ENCODE measurements at regions of chr1 and their contacts with region 1.

Region 1: GRCh38 chr1:86833461-86834215 is 80.3 kb downstream of the SELENOF start:
- DNase-seq: peak in 2 of 3 donors; percentile 64 to 89
- ATAC-seq: peak; percentile 98
- H3K4me3 ChIP-seq: no peak overlapping the region
- H3K4me1 ChIP-seq: no peaks in the 10 kb centered on the region
- CTCF ChIP-seq: no peak

Region 2: GRCh38 chr1:86948212-86948611 is 114.6 kb after region 1 on chr1:
- intact Hi-C with region 1: no loop called
- DNase-seq: no peak
- ATAC-seq: no peak
- H3K4me3 ChIP-seq: no peak overlapping the region
- H3K4me1 ChIP-seq: no peaks in the 10 kb centered on the region
- CTCF ChIP-seq: no peak

Region 3: GRCh38 chr1:86965012-86965826 is 131.6 kb after region 1 on chr1:
- intact Hi-C with region 1: loop called (anchors 10 kb)
- DNase-seq: peak in 1 of 3 donors; percentile 64
- ATAC-seq: no peak
- H3K4me3 ChIP-seq: no peak overlapping the region
- H3K4me1 ChIP-seq: no peaks in the 10 kb centered on the region
- CTCF ChIP-seq: peak; percentile 11

Region 4: DNA sequence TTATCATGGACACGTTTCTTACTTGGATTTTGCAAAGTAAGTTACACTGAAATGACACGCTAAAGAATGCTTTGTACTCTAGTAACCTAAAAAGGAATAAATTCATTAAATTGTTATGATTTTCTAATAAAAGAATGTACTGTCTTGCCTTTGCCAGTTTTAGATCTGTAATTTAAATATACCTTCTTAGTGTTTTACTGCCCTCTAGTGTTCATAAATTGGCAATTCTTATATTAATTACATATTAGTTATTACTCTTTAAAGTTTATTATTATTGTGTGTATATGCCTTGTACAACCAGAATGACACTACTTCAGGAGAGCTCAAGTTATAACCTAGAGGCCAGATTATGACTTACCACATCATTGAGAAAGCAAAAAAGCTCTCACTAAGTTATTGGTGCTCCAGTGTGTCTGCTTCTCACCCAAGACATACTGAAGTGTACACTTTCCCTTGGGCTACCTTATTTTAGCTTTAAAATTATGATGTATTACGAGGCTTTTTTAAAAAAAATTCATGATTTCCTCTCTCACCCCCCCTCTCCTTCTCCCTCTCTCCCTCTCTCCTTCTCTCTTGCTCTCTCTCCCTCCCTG is 250.7 kb after region 1 on chr1:
- intact Hi-C with region 1: loop called in 1 of 2 experiments (anchors 5 kb)
- DNase-seq: no peak
- ATAC-seq: no peak
- H3K4me3 ChIP-seq: no peak overlapping the region
- H3K4me1 ChIP-seq: no peaks in the 10 kb centered on the region
- CTCF ChIP-seq: no peak

Measured in mucosa of descending colon (tissue), 3 donors.